ENCODE measurements at regions of chr9 and their contacts with region 1.

Region 1: DNA sequence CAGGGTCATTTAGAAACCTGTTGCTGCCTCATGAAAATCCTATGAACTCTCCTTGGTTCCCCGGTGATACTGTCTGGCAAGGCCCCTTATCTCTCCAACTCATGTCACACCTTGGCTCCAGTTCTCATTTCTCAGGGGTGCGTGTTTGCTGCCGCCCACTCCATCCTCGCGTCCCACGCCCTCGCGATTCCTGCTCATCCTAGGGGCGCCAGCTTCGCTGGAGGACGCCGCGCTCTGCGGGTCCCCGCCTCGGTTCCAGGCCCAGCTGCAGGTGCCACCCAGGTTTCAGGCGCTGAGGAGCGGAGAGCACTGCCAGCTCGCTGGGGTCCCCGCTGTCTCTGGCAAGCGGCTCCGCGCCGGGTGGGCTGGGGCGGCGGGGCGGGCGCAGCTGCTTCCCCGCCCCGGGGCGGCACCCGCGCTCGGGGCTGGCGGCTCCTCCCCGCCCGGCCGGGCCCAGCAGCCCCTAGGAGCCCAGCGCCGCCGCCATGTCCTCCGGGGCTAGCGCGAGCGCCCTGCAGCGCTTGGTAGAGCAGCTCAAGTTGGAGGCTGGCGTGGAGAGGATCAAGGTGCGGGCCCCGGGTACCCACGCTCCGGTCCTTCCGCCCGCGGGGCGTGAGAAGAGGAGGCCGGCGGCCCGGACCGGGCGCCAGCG is at the start of gene GNG10:
- DNase-seq: peak; percentile 61
- H3K4me3 Mint-ChIP-seq: peak within 1 kb of the TSS; percentile 87
- H3K27ac Mint-ChIP-seq: peak within 1 kb of the TSS; percentile 93
- H3K4me1 Mint-ChIP-seq: peaks cover 19% of the 10 kb centered on the region
- H3K27me3 Mint-ChIP-seq: no peaks in the 10 kb centered on the region
- CTCF ChIP-seq: no peak
- total RNA-seq, gene GNG10: 42.0 and 61.7 TPM in 2 replicates

Region 2: DNA sequence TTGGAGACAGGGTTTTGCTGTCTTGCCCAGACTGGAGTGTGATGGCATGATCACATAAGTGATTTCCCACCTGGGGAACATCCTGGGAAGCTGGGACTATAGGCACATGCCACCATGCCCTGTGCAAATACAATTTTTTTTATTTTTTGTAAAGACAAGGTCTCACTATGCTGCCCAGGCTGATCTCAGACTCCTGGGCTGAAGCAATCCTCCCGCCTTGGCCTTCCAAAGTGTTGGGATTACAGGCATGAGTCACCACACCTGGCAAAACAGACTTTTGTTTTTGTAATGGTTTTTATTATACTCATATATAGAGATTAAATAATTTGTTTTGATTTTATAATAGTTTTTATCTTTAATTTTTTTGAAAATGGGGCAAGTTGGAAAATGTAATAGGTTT is 15.5 kb before region 1 on chr9:
- CTCF ChIA-PET with region 1: interaction called, 3 read pairs
- POLR2A ChIA-PET with region 1: interaction called, 10 read pairs
- intact Hi-C with region 1: no loop called
- DNase-seq: peak; percentile 61
- H3K4me3 Mint-ChIP-seq: no peak overlapping the region
- H3K27ac Mint-ChIP-seq: peak overlapping the region; percentile 37
- H3K4me1 Mint-ChIP-seq: peaks cover 4% of the 10 kb centered on the region
- H3K27me3 Mint-ChIP-seq: no peaks in the 10 kb centered on the region
- CTCF ChIP-seq: no peak

Region 3: GRCh38 chr9:111743275-111743674 is 82.0 kb after region 1 on chr9:
- CTCF ChIA-PET with region 1: interaction called, 4 read pairs
- POLR2A ChIA-PET with region 1: interaction called, 16 read pairs
- intact Hi-C with region 1: no loop called
- DNase-seq: peak; percentile 94
- H3K4me3 Mint-ChIP-seq: peak overlapping the region; percentile 53
- H3K27ac Mint-ChIP-seq: peak overlapping the region; percentile 99
- H3K4me1 Mint-ChIP-seq: peaks cover 17% of the 10 kb centered on the region
- H3K27me3 Mint-ChIP-seq: no peaks in the 10 kb centered on the region
- CTCF ChIP-seq: no peak

Measured in MCF 10A (cell line).